ENCODE measurements at regions of chr7 and their contacts with region 1.

Region 1: DNA sequence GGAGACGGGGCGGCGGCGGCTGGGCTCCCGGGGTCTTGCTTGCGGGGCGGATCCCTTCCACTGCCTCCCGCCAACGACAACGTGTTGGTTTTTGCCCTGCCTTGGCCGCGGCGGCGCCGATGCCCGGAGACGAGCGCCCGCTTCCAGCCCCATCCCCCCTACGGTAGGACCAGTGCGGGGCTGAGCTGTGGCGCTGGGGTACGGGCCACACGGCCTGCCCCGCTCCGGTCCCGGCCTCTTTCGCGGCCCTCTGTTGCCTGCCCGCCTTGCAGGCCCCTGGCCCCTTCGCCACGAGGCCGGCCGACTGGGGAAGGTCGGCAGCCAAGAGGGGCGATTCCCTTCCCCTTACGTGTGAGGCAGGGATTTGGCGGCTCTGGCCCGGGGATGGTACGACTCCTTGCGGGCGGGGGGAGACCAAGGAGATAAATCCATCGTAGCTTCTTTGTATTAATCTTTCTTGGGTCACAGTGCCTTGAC is 488 bp downstream of the EIF4H start:
- DNase-seq: peak; percentile 24
- H3K4me3 ChIP-seq: peak overlapping the region; percentile 83
- H3K27ac ChIP-seq: peak overlapping the region; percentile 78
- H3K27me3 ChIP-seq: no peaks in the 10 kb centered on the region
- CTCF ChIP-seq: no peak

Region 2: DNA sequence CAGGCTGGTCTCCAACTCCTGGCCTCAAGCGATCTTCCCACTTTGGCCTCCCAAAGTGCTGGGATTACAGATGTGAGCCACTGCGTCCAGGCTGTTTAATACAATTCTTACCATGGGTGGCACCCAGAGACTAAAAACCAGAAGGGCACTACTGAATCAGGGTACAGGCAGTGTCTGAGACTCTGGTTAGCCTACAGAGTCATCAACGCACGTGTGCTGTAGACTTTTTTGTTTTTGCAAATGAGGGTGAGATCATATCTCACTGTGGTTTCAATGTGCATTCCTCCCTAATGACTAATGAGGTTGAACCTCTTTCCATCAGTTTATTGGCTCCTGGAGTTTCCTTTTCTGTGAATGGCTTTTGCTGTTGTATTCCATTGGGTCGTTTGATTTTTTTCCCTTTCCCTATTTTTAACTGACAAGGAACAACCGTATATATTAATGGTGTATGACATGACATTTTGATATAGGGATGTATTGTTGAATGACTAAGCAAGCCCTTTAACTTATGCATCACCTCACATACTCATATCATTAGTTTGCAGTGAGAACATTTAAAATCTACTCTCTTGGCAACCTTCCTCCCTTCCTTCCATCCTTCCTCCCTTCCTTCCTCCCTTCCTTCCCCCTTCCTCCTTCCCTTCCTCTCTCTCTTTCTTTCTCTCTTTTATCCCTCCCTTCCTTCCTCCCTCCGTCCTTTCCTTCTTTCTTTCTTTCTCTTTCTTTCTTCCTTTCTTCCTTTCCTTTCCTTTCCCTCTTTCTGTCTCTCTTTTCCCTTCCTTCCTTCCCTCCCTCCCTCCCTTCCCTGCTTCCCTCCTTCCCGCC is 323.0 kb before region 1 on chr7:
- in situ Hi-C with region 1: loop called (anchors 25 kb)
- DNase-seq: peak; percentile 93
- H3K4me3 ChIP-seq: no peak overlapping the region
- H3K27ac ChIP-seq: peak overlapping the region; percentile 95
- H3K27me3 ChIP-seq: no peaks in the 10 kb centered on the region
- CTCF ChIP-seq: no peak

Region 3: GRCh38 chr7:74043523-74043951 is 131.1 kb before region 1 on chr7:
- in situ Hi-C with region 1: no loop called
- DNase-seq: no peak
- H3K4me3 ChIP-seq: no peak overlapping the region
- H3K27ac ChIP-seq: no peak overlapping the region
- H3K27me3 ChIP-seq: no peaks in the 10 kb centered on the region
- CTCF ChIP-seq: no peak

Region 4: DNA sequence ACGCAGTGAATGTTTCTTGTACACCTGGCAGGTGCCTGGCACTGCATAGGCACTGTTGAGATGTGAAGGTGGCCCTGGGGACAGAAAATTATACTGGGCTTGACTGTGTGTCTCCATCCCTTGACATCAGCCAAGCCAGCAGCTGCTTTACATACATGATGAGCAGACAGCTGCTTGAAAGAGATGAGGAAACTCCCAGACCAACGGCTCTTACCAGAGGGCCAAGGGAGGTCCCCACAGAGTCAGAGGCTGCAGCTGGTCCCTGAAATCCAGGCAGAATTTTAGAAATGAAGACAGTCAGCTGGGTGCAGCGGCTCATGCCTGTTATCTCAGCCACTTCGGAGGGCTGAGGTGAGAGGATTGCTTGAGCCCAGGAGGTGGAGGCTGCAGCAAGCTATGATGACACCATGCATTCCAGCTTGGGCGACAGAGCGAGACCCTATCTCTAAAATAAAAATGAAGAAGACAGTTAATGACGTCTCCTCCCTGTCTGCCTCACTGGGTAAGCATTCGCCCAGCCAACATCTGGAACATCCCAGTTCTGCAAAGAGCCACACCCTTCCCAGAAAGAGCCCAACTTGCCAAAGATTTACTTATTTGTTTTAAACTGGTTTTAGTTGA is 73.5 kb before region 1 on chr7:
- in situ Hi-C with region 1: no loop called
- DNase-seq: no peak
- H3K4me3 ChIP-seq: no peak overlapping the region
- H3K27ac ChIP-seq: no peak overlapping the region
- H3K27me3 ChIP-seq: no peaks in the 10 kb centered on the region
- CTCF ChIP-seq: no peak

Measured in brain microvascular endothelial cell (primary cell).